A549 (cell line): ENCODE measurements at regions of chr1 and their contacts with region 1.

Region 1: GRCh38 chr1:231211005-231211857 is 29.8 kb upstream of the GNPAT start:
- DNase-seq: peak; percentile 73 to 81
- ATAC-seq: peak; percentile 89 to 93
- H3K4me3 ChIP-seq: peak overlapping the region; percentile 44
- H3K27ac ChIP-seq: peak overlapping the region; percentile 57 to 85
- H3K4me1 ChIP-seq: peaks cover 15% of the 10 kb centered on the region
- CTCF ChIP-seq: peak; percentile 97
- EP300 ChIP-seq: no peak
- POLR2A ChIP-seq: no peak
- RAD21 ChIP-seq: peak; percentile 96 to 99

Region 2: GRCh38 chr1:230797942-230798418 is 413.3 kb before region 1 on chr1:
- CTCF ChIA-PET with region 1: interaction called, 65 read pairs
- POLR2A ChIA-PET with region 1: no interaction called
- DNase-seq: peak; percentile 49 to 64
- ATAC-seq: peak; percentile 91 to 95
- H3K4me3 ChIP-seq: no peak overlapping the region
- H3K27ac ChIP-seq: no peak overlapping the region
- H3K4me1 ChIP-seq: no peaks in the 10 kb centered on the region
- CTCF ChIP-seq: peak; percentile 81
- EP300 ChIP-seq: no peak
- POLR2A ChIP-seq: no peak
- RAD21 ChIP-seq: peak; percentile 81 to 87

Region 3: GRCh38 chr1:231091831-231092301 is 119.4 kb before region 1 on chr1:
- CTCF ChIA-PET with region 1: interaction called, 12 read pairs
- POLR2A ChIA-PET with region 1: no interaction called
- DNase-seq: peak; percentile 44 to 61
- ATAC-seq: peak; percentile 76 to 90; a peak in 5 of 6 replicates
- H3K4me3 ChIP-seq: no peak overlapping the region
- H3K27ac ChIP-seq: peak overlapping the region in 1 of 2 experiments; percentile 47; a peak in 2 of 6 replicates
- H3K4me1 ChIP-seq: 0 out of 3 replicates have a peak, but pooled peaks cover 6% of the 10 kb centered on the region
- CTCF ChIP-seq: peak; percentile 75
- EP300 ChIP-seq: no peak
- POLR2A ChIP-seq: no peak
- RAD21 ChIP-seq: peak; percentile 64 to 78

Region 4: GRCh38 chr1:231194843-231195516 is 16.3 kb before region 1 on chr1:
- CTCF ChIA-PET with region 1: interaction called, 14 read pairs
- POLR2A ChIA-PET with region 1: no interaction called
- DNase-seq: peak; percentile 78 to 97
- ATAC-seq: peak; percentile 85 to 87
- H3K4me3 ChIP-seq: no peak overlapping the region
- H3K27ac ChIP-seq: peak overlapping the region; percentile 94 to 96
- H3K4me1 ChIP-seq: peaks cover 50% of the 10 kb centered on the region
- CTCF ChIP-seq: no peak
- EP300 ChIP-seq: peak; percentile 96 to 98
- POLR2A ChIP-seq: no peak
- RAD21 ChIP-seq: peak; percentile 12 to 62; a peak in 4 of 5 replicates